ENCODE measurements at regions of chr14 and their contacts with region 1.

Region 1: GRCh38 chr14:22978891-22979671 is 3.3 kb downstream of the AJUBA start:
- DNase-seq: peak; percentile 95
- H3K4me3 ChIP-seq: peak overlapping the region; percentile 64 to 76 (median 65)
- H3K27ac ChIP-seq: peak overlapping the region; percentile 84
- H3K4me1 ChIP-seq: peaks cover 45% of the 10 kb centered on the region
- H3K27me3 ChIP-seq: no peaks in the 10 kb centered on the region
- CTCF ChIP-seq: peak in 1 of 2 donors; percentile 13

Region 2: DNA sequence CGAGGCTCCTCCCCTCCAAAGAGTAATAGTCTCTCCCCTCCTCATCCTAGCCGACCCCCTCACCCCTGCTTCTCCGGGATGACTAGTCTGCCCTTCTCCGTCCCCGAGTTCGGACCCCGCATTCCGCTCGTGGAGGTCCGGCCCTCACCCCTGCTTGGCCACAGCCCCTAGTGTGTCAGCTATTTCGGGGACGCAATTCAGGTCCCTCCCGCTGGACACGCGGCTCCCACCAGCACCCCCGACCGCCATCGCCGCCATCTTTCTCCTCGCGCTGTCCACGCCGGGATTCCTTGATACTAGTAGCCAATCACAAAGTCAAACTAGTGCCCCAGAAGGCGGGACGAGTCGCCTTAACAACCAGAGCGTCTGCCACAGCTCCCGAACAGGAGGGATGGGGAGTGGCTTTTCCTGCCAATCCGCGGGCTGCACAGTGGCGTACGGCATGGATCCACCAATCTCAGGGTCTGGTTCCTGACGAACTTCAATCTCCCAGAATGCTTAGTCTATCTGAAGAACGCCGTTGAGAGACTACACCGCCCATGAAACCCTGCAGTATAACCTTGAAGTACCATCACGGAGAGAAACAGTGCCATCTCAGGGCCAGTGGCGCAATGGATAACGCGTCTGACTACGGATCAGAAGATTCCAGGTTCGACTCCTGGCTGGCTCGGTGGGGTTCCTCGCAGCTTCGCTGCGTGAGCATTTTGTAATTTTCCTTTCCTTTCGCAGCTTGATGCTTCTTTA is 49.8 kb before region 1 on chr14 and contains the start of gene PRMT5:
- CTCF ChIA-PET with region 1: interaction called, 5 read pairs
- dilution Hi-C with region 1: no loop called
- in situ Hi-C with region 1: no loop called
- intact Hi-C with region 1: loop called (anchors 1 kb)
- DNase-seq: peak; percentile 99
- H3K4me3 ChIP-seq: peak within 1 kb of the TSS; percentile 87 to 97 (median 94)
- H3K27ac ChIP-seq: peak within 1 kb of the TSS; percentile 87
- H3K4me1 ChIP-seq: peaks cover 27% of the 10 kb centered on the region
- H3K27me3 ChIP-seq: no peaks in the 10 kb centered on the region
- CTCF ChIP-seq: no peak
- total RNA-seq, gene PRMT5: 61.3 to 120 TPM

Region 3: GRCh38 chr14:23057757-23058653 is 78.9 kb after region 1 on chr14:
- CTCF ChIA-PET with region 1: no interaction called
- dilution Hi-C with region 1: no loop called
- in situ Hi-C with region 1: no loop called
- intact Hi-C with region 1: no loop called
- DNase-seq: peak; percentile 74
- H3K4me3 ChIP-seq: peak overlapping the region; percentile 50 to 65 (median 55)
- H3K27ac ChIP-seq: no peak overlapping the region
- H3K4me1 ChIP-seq: peaks cover 31% of the 10 kb centered on the region
- H3K27me3 ChIP-seq: no peaks in the 10 kb centered on the region
- CTCF ChIP-seq: peak; percentile 82 to 93

Measured in mammary epithelial cell (primary cell).